Activated naive CD4-positive, alpha-beta T cell treated with anti-CD3 and anti-CD28 coated beads for 36 hours (primary cell): ENCODE measurements at regions of chr7 and their contacts with region 1.

Region 1: GRCh38 chr7:3065724-3066143 is 22.1 kb upstream of the CARD11 start:
- DNase-seq: peak; percentile 89
- H3K4me3 Mint-ChIP-seq: peak overlapping the region; percentile 39
- H3K27ac Mint-ChIP-seq: peak overlapping the region; percentile 48
- H3K4me1 Mint-ChIP-seq: peaks cover 87% of the 10 kb centered on the region
- H3K27me3 Mint-ChIP-seq: no peaks in the 10 kb centered on the region

Region 2: DNA sequence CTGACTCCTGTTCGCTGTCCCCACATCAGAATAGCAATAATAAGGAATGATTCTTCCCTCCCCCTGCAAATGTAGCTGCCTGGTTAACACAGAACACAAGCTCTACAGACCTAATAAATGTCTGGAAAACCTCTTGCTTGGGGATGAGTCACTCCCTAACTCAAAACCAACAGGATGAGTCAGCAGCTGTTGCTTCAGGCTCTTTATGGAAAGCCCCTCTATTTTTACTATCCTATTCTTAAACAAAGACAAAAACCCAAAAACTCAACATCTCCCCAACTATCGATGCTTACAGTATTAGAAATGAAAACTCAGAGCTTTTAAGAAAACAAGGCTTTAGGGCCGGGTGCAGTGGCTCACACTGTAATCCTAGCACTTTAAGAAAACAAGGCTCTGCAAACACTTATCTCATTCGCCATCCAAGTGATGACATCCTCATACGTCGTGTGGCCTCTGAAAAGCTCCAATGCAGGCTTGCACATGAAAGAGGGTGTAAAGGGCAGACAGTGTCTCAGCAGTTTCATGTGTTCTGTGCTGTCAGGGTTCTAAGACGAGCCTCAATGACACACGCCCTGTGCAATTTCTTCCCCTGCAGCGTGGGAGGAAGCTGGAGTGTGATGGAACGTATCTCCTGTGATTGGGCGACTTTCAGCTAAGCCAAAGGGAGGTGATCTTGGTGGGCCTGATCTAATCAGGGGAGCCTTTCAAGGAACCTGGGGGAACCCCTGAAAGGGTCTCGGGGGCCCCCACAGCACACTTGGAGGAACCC is 307.6 kb before region 1 on chr7:
- CTCF ChIA-PET with region 1: no interaction called
- intact Hi-C with region 1: loop called (anchors 10 kb)
- DNase-seq: peak; percentile 91
- H3K4me3 Mint-ChIP-seq: peak overlapping the region; percentile 48
- H3K27ac Mint-ChIP-seq: peak overlapping the region; percentile 94
- H3K4me1 Mint-ChIP-seq: peaks cover 35% of the 10 kb centered on the region
- H3K27me3 Mint-ChIP-seq: no peaks in the 10 kb centered on the region

Region 3: DNA sequence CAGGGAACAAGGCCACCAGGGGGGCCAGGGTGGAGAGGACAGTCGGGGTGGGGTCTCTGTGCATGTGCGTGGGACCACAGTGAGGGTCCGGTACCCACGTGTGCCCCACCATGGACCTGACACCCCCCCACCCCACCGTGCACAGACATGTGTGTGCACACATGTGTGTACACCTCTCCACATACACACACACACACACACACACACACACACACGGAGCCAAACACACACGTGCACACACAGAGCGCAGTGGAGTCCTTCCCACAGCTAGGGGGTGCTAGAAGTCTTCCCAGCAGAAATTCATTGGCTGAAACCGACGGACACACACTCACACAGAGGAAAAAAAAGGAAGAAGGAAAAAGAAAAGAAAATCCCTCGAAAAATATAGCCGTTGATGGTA is 178.8 kb before region 1 on chr7:
- CTCF ChIA-PET with region 1: interaction called, 7 read pairs
- intact Hi-C with region 1: loop called (anchors 2 kb)
- DNase-seq: peak; percentile 78
- H3K4me3 Mint-ChIP-seq: no peak overlapping the region
- H3K27ac Mint-ChIP-seq: no peak overlapping the region
- H3K4me1 Mint-ChIP-seq: peaks cover 3% of the 10 kb centered on the region
- H3K27me3 Mint-ChIP-seq: no peaks in the 10 kb centered on the region

Region 4: DNA sequence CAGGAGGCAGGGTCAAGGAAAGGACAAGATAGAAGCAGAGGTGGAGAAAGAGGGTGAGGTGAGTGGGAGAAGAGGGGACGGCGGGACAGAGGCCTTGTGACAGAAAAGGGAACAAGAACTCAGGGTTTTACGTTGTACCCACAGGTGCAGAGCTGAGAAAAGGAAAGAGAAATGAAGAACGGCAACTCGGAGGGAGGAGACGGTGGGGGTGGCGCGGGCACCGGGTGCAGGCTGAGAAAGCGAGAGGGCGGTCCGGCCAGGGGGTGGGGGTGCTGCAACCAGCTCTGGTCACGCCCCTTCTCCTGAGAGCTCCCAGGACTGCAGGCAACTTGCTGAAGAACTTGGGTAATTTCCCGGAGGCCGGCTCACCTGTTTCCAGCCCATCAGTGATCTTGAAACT is 87.3 kb before region 1 on chr7:
- CTCF ChIA-PET with region 1: interaction called, 4 read pairs
- intact Hi-C with region 1: loop called (anchors 1 kb)
- DNase-seq: peak; percentile 99
- H3K4me3 Mint-ChIP-seq: peak overlapping the region; percentile 76
- H3K27ac Mint-ChIP-seq: peak overlapping the region; percentile 98
- H3K4me1 Mint-ChIP-seq: peaks cover 70% of the 10 kb centered on the region
- H3K27me3 Mint-ChIP-seq: no peaks in the 10 kb centered on the region

Region 5: DNA sequence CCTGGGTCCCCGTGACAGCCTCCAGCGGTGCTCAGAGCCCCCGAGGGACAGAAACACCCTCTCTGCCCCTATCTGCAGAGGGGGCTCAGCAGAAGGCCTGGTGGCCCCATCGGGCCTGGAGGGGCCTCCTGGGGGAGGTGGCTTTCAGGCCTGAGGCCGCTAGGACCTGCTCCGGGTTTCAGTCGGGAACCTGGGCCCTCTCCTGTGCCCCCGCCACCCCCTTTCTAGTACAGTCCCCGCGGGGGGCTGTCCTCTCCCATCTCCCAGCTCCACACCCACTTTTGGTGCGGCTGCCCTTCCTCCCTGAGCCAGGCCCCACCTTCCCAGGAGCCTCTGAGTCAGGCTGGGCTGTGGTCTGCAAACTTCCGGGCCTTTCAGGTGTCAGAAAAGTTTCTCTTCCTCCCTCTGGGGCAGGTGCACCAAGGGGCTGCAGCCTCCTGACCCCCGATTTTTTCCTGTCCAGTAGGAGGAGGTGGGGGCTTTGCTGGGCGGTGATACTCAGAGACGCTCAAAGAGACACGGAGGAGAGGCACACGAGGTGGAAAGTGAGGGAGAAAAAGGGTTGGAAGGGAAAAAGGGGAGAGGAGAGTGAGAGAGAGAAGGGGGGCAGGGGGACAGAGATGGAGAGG is 22.8 kb before region 1 on chr7:
- CTCF ChIA-PET with region 1: interaction called, 6 read pairs
- intact Hi-C with region 1: loop called (anchors 1 kb)
- DNase-seq: peak; percentile 90
- H3K4me3 Mint-ChIP-seq: peak overlapping the region; percentile 99
- H3K27ac Mint-ChIP-seq: peak overlapping the region; percentile 99
- H3K4me1 Mint-ChIP-seq: peaks cover 51% of the 10 kb centered on the region
- H3K27me3 Mint-ChIP-seq: no peaks in the 10 kb centered on the region

Region 6: DNA sequence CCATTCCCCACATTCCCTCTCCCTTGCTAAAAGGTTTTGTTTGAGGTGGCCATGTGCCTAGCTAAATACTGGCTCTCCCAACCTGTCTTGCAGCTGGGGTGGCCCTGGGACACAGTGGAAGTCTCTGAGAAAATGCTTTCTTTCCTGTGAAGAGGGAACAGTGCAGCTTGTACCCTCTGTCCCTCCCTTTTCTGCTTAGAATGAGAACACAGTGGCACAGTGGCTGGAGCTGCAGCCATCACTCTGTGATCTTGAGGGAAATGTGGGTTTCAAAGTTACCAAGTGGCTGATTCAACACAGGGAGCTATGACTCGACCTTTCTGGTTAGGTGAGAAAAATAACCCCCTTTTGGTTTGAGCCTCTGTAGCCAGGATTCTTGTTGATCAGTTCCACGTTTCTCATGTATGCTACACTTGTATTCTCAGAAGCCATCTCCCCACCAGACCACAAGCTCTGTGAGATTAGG is 40.7 kb after region 1 on chr7:
- CTCF ChIA-PET with region 1: no interaction called
- intact Hi-C with region 1: loop called (anchors 1 kb)
- DNase-seq: peak; percentile 78
- H3K4me3 Mint-ChIP-seq: no peak overlapping the region
- H3K27ac Mint-ChIP-seq: peak overlapping the region; percentile 86
- H3K4me1 Mint-ChIP-seq: peaks cover 68% of the 10 kb centered on the region
- H3K27me3 Mint-ChIP-seq: no peaks in the 10 kb centered on the region

Region 7: DNA sequence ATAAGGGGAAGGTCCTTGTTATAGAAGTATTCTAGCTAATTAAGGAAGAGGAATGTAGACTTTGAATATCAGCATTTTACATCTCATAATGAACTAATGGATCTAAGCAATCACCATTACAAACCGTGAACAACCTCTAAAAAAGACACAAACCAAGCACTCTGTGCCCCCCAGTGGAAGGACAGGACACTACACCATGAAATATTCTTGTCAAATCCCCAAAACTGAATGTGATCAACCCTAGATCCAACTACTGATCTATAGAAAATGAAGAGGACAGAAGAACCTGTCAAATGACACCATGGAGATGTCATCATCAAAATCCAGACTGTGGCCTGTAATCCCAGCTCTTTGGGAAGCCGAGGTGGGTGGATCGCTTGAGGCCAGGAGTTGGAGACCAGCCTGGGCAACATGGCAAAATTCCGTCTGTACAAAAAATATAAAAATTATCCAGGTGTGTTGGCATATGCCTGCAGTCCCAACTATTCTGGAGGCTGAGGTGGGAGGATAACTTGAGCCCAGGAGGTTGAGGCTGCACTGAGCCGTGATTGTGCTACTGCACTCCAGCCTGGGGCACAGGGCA is 89.3 kb after region 1 on chr7:
- CTCF ChIA-PET with region 1: interaction called, 49 read pairs
- intact Hi-C with region 1: loop called (anchors 1 kb)
- DNase-seq: peak; percentile 82
- H3K4me3 Mint-ChIP-seq: no peak overlapping the region
- H3K27ac Mint-ChIP-seq: no peak overlapping the region
- H3K4me1 Mint-ChIP-seq: peaks cover 20% of the 10 kb centered on the region
- H3K27me3 Mint-ChIP-seq: no peaks in the 10 kb centered on the region